Endothelial cell of umbilical vein (primary cell): ENCODE measurements at regions of chr7 and their contacts with region 1.

Region 1: GRCh38 chr7:15720849-15721471 is 34.5 kb upstream of the MEOX2 start:
- DNase-seq: peak; percentile 84
- H3K4me3 ChIP-seq: no peak overlapping the region
- H3K27ac ChIP-seq: peak overlapping the region; percentile 11
- H3K4me1 ChIP-seq: peaks cover 17% of the 10 kb centered on the region
- H3K27me3 ChIP-seq: no peaks in the 10 kb centered on the region
- CTCF ChIP-seq: peak; percentile 50 to 52
- POLR2A ChIP-seq: no peak

Region 2: DNA sequence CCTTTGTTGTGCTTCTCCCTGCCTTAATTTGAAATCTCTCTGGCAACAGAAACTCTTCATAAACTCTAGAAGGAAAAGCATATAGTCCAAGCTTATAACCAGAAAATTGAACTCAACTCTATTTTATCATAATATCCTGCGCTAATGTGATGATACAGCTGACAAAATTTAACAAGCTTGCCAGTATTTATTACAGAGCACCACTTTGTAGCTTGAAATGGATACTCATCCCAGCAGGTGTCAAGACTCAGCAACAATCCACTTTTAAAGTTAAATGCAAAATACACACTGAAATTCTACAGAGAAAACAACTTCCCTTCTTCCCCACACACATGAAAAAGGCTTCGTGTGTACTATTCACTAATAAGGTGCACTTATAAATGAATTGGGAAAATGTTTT is 388.0 kb before region 1 on chr7:
- CTCF ChIA-PET with region 1: interaction called, 33 read pairs
- POLR2A ChIA-PET with region 1: no interaction called
- dilution Hi-C with region 1: no loop called
- intact Hi-C with region 1: no loop called
- DNase-seq: no peak
- H3K4me3 ChIP-seq: no peak overlapping the region
- H3K27ac ChIP-seq: no peak overlapping the region
- H3K4me1 ChIP-seq: no peaks in the 10 kb centered on the region
- H3K27me3 ChIP-seq: no peaks in the 10 kb centered on the region
- CTCF ChIP-seq: no peak
- POLR2A ChIP-seq: no peak

Region 3: DNA sequence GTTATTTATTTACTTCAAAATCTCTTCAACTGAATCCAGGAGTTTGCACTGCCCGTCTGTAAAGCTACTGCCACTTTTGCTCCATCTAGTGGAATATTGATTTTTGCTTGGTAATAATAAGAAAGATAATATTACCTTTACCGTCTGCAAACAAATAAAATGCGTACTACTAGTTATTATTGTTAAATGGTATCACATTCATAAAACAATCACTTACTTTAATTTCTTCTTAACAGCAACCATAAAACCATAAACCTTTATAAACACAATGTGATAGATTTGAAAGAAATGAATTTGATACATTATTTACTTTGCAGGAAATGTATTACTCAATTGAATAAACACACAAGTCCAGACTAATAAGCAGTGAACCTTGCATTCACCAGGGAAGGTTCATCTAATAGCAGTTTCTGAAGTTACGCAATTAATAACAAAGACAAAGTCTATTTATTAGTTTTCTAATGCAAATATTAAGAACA is 165.5 kb before region 1 on chr7:
- CTCF ChIA-PET with region 1: interaction called, 27 read pairs
- POLR2A ChIA-PET with region 1: no interaction called
- dilution Hi-C with region 1: loop called (anchors 25 kb)
- intact Hi-C with region 1: loop called (anchors 5 kb)
- DNase-seq: peak; percentile 73
- H3K4me3 ChIP-seq: peak overlapping the region in 2 of 3 experiments; percentile 12 to 32
- H3K27ac ChIP-seq: peak overlapping the region; percentile 27
- H3K4me1 ChIP-seq: peaks cover 36% of the 10 kb centered on the region
- H3K27me3 ChIP-seq: no peaks in the 10 kb centered on the region
- CTCF ChIP-seq: peak in 1 of 2 donors; percentile 6
- POLR2A ChIP-seq: no peak

Region 4: GRCh38 chr7:15692501-15693020 is 28.4 kb before region 1 on chr7:
- CTCF ChIA-PET with region 1: interaction called, 107 read pairs
- POLR2A ChIA-PET with region 1: no interaction called
- dilution Hi-C with region 1: no loop called
- intact Hi-C with region 1: no loop called
- DNase-seq: no peak
- H3K4me3 ChIP-seq: no peak overlapping the region
- H3K27ac ChIP-seq: no peak overlapping the region
- H3K4me1 ChIP-seq: peaks cover 14% of the 10 kb centered on the region
- H3K27me3 ChIP-seq: no peaks in the 10 kb centered on the region
- CTCF ChIP-seq: no peak
- POLR2A ChIP-seq: no peak

Region 5: DNA sequence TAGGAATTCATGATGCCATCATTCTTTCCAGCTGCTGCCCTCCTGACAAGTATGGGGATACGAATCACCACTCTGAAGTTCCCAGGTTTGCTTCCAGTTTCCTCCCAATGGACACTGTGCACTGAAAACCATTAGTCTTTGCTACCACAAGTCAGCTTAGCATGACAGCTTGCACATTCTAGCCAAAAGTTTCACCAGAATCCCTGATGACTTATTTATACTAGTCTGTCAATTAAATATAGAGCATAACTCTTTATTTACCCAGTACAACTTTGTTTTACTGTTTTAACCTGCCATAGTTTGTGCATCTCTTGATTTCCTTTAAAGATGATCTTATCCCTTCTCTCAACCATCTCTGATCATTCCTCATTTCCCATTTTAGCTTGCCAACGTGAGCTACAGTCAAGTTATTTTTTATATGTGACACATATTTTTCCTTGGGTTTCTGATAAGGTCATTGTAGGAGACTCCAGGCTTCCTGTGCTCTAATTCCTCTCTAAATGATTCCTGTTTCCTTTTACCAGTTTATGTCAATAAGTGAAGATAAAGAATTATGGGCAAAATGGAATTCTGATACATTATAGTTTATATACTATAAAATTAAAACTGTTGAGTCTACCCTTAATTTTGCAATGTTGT is 133.0 kb after region 1 on chr7:
- CTCF ChIA-PET with region 1: interaction called, 10 read pairs
- POLR2A ChIA-PET with region 1: no interaction called
- dilution Hi-C with region 1: no loop called
- intact Hi-C with region 1: loop called (anchors 5 kb)
- DNase-seq: peak; percentile 71
- H3K4me3 ChIP-seq: no peak overlapping the region
- H3K27ac ChIP-seq: peak overlapping the region; percentile 86
- H3K4me1 ChIP-seq: peaks cover 32% of the 10 kb centered on the region
- H3K27me3 ChIP-seq: no peaks in the 10 kb centered on the region
- CTCF ChIP-seq: no peak
- POLR2A ChIP-seq: no peak

Region 6: DNA sequence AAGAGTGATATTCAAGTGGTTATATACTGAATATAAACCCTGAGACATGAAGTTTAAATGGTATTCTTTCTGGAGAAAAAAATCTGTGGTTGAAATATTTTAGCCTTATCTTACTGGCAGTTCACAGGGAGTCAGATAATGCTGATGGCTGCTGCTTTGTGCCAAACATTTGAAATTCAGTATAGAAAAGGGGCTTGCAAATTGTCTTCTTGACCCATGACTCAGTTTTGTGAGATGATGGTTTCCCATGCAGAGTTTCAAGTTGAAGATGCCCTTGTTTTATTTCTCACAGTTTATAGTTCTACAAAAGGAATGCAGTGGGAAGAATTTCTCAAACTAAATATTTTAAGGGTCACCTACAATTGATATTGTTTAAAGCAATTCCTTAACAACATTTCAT is 216.6 kb after region 1 on chr7:
- CTCF ChIA-PET with region 1: no interaction called
- POLR2A ChIA-PET with region 1: no interaction called
- dilution Hi-C with region 1: no loop called
- intact Hi-C with region 1: no loop called
- DNase-seq: no peak
- H3K4me3 ChIP-seq: no peak overlapping the region
- H3K27ac ChIP-seq: no peak overlapping the region
- H3K4me1 ChIP-seq: no peaks in the 10 kb centered on the region
- H3K27me3 ChIP-seq: peaks cover 0 to 2% of the 10 kb centered on the region in 2 experiments
- CTCF ChIP-seq: no peak
- POLR2A ChIP-seq: no peak

Region 7: GRCh38 chr7:16071246-16071857 is 350.4 kb after region 1 on chr7:
- CTCF ChIA-PET with region 1: interaction called, 21 read pairs
- POLR2A ChIA-PET with region 1: no interaction called
- dilution Hi-C with region 1: no loop called
- intact Hi-C with region 1: loop called (anchors 2 kb)
- DNase-seq: peak; percentile 70
- H3K4me3 ChIP-seq: no peak overlapping the region
- H3K27ac ChIP-seq: no peak overlapping the region
- H3K4me1 ChIP-seq: peaks cover 12% of the 10 kb centered on the region
- H3K27me3 ChIP-seq: no peaks in the 10 kb centered on the region
- CTCF ChIP-seq: peak; percentile 41 to 57
- POLR2A ChIP-seq: no peak